Naive thymus-derived CD4-positive, alpha-beta T cell (primary cell): ENCODE measurements at regions of chr3 and their contacts with region 1.

Region 1: DNA sequence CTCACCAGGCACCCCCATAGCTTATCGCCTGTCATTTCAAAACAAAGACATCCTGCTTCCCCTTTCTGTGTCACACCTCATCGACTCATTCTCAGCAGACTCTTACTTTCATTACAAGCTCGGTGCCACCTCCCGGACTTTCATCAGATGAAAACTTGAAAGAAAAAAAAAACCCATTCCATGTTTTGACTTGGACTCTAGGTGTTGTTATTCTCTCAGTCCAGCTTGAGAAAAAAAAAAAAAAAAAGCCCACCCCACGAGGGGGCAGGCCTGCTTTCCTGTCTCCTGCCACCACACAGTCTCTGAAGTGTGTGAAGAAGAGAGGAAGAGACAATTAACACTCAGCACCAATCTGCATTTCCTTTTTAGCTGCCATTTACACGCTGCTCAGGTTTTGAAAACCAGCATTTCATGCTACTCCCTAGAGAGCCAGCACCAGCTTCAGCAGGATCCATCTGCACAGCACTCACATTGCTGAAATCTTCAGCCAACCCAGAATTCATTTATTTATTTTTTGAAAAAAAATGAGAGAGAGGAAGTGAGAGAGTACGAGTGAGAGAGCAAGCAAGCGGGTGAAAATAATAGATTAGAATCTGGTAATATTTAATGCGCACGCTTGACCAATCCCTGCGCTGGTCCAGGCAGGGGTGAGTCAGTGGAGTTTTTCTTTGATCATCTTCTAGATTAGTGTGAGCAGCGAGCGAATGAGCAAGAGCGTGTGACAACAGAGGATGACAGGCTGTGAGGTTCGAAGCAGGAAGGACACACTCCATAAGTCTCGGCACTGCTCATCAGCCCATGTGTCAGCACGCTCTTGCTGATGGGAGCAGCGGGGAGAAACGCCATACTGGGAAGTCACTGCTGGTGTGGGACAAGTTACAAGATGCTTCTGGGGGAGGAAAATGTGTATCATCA is 23.5 kb downstream of the ZNF80 start:
- DNase-seq: peak; percentile 33 to 83 (median 71)
- ATAC-seq: peak; percentile 61
- H3K4me3 ChIP-seq: peak overlapping the region; percentile 50
- H3K4me3 Mint-ChIP-seq: no peak overlapping the region
- H3K27ac ChIP-seq: peak overlapping the region; percentile 90
- H3K27ac Mint-ChIP-seq: no peak overlapping the region
- H3K4me1 ChIP-seq: peaks cover 43 to 65% of the 10 kb centered on the region in 2 donors
- H3K4me1 Mint-ChIP-seq: peaks cover 0 to 26% (median 3%) of the 10 kb centered on the region in 7 donors
- H3K27me3 ChIP-seq: no peaks in the 10 kb centered on the region
- H3K27me3 Mint-ChIP-seq: no peaks in the 10 kb centered on the region

Region 2: GRCh38 chr3:113019182-113020137 is 1194.4 kb before region 1 on chr3:
- CTCF ChIA-PET with region 1: no interaction called
- POLR2A ChIA-PET with region 1: no interaction called
- intact Hi-C with region 1: loop called in 1 of 2 experiments (anchors 5 kb)
- DNase-seq: peak; percentile 69 to 89 (median 74)
- ATAC-seq: peak; percentile 92
- H3K4me3 ChIP-seq: peak overlapping the region; percentile 81
- H3K4me3 Mint-ChIP-seq: peak overlapping the region; percentile 87 to 97 (median 92)
- H3K27ac ChIP-seq: peak overlapping the region; percentile 96
- H3K27ac Mint-ChIP-seq: peak overlapping the region; percentile 87 to 96 (median 91)
- H3K4me1 ChIP-seq: peaks cover 19 to 21% of the 10 kb centered on the region in 2 donors
- H3K4me1 Mint-ChIP-seq: peaks cover 44 to 87% (median 71%) of the 10 kb centered on the region in 7 donors
- H3K27me3 ChIP-seq: no peaks in the 10 kb centered on the region
- H3K27me3 Mint-ChIP-seq: no peaks in the 10 kb centered on the region

Region 3: GRCh38 chr3:114056130-114057010 is 157.5 kb before region 1 on chr3 and contains the starts of genes CCDC191 and QTRT2:
- CTCF ChIA-PET with region 1: no interaction called
- POLR2A ChIA-PET with region 1: no interaction called
- intact Hi-C with region 1: loop called (anchors 1 kb)
- DNase-seq: peak; percentile 82 to 99 (median 98)
- ATAC-seq: peak; percentile 97
- H3K4me3 ChIP-seq: peak within 1 kb of the TSS; percentile 95
- H3K4me3 Mint-ChIP-seq: peak within 1 kb of the TSS; percentile 91 to 100 (median 98)
- H3K27ac ChIP-seq: peak within 1 kb of the TSS; percentile 91
- H3K27ac Mint-ChIP-seq: peak within 1 kb of the TSS; percentile 87 to 99 (median 97)
- H3K4me1 ChIP-seq: peaks cover 10 to 12% of the 10 kb centered on the region in 2 donors
- H3K4me1 Mint-ChIP-seq: peaks cover 24 to 60% (median 55%) of the 10 kb centered on the region in 7 donors
- H3K27me3 ChIP-seq: no peaks in the 10 kb centered on the region
- H3K27me3 Mint-ChIP-seq: peaks cover 0 to 2% (median 0%) of the 10 kb centered on the region in 5 donors
- total RNA-seq, gene CCDC191: 3.9 to 8.8 (median 5.1) TPM
- total RNA-seq, gene QTRT2: 29.9 to 38.8 (median 33.8) TPM

Region 4: DNA sequence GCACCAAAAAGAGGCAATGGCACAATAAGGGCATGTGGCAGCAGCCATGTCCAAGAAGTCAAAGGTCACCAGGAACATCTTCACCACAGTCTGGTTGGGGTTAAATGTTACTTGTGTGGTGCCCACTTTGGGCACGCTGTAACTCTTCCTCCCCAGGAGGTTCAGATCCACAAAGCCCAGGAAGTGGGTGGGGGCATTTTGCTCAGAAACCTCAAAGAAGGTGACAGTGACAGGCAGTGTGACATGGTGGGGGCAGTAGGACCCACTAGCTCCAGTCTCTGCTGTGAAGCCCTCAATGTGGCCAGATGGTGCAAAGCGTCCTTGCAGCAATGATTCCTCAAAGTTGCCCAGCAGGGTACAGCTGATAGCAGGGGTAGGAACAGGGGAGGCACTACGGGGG is 17.7 kb after region 1 on chr3:
- CTCF ChIA-PET with region 1: interaction called, 12 read pairs
- POLR2A ChIA-PET with region 1: interaction called, 132 read pairs
- intact Hi-C with region 1: loop called in 1 of 2 experiments (anchors 1 kb)
- DNase-seq: peak in 7 of 9 donors; percentile 31 to 54 (median 46)
- ATAC-seq: peak; percentile 84
- H3K4me3 ChIP-seq: peak overlapping the region; percentile 7
- H3K4me3 Mint-ChIP-seq: peak overlapping the region; percentile 33 to 78 (median 68)
- H3K27ac ChIP-seq: peak overlapping the region; percentile 62
- H3K27ac Mint-ChIP-seq: peak overlapping the region; percentile 80 to 96 (median 88)
- H3K4me1 ChIP-seq: peaks cover 61 to 79% of the 10 kb centered on the region in 2 donors
- H3K4me1 Mint-ChIP-seq: peaks cover 38 to 89% (median 80%) of the 10 kb centered on the region in 7 donors
- H3K27me3 ChIP-seq: no peaks in the 10 kb centered on the region
- H3K27me3 Mint-ChIP-seq: peaks cover 0 to 2% (median 0%) of the 10 kb centered on the region in 5 donors

Region 5: GRCh38 chr3:114299421-114299820 is 85.5 kb after region 1 on chr3:
- CTCF ChIA-PET with region 1: interaction called, 9 read pairs
- POLR2A ChIA-PET with region 1: interaction called, 17 read pairs
- intact Hi-C with region 1: loop called in 1 of 2 experiments (anchors 1 kb)
- DNase-seq: peak in 5 of 9 donors; percentile 18 to 34 (median 26)
- ATAC-seq: peak; percentile 65
- H3K4me3 ChIP-seq: no peak overlapping the region
- H3K4me3 Mint-ChIP-seq: peak overlapping the region in 2 of 10 donors; percentile 19 to 56
- H3K27ac ChIP-seq: no peak overlapping the region
- H3K27ac Mint-ChIP-seq: peak overlapping the region in 1 of 9 donors; percentile 17
- H3K4me1 ChIP-seq: peaks cover 0 to 11% of the 10 kb centered on the region in 2 donors
- H3K4me1 Mint-ChIP-seq: peaks cover 0 to 21% (median 4%) of the 10 kb centered on the region in 7 donors
- H3K27me3 ChIP-seq: no peaks in the 10 kb centered on the region
- H3K27me3 Mint-ChIP-seq: no peaks in the 10 kb centered on the region

Region 6: GRCh38 chr3:115147329-115148141 is 933.7 kb after region 1 on chr3:
- CTCF ChIA-PET with region 1: no interaction called
- POLR2A ChIA-PET with region 1: interaction called, 9 read pairs
- intact Hi-C with region 1: loop called (anchors 1 kb)
- DNase-seq: peak; percentile 84 to 99 (median 98)
- ATAC-seq: peak; percentile 83
- H3K4me3 ChIP-seq: peak overlapping the region; percentile 65
- H3K4me3 Mint-ChIP-seq: peak overlapping the region; percentile 93 to 100 (median 96)
- H3K27ac ChIP-seq: peak overlapping the region; percentile 98
- H3K27ac Mint-ChIP-seq: peak overlapping the region; percentile 97 to 100 (median 100)
- H3K4me1 ChIP-seq: peaks cover 15 to 18% of the 10 kb centered on the region in 2 donors
- H3K4me1 Mint-ChIP-seq: peaks cover 16 to 45% (median 24%) of the 10 kb centered on the region in 7 donors
- H3K27me3 ChIP-seq: no peaks in the 10 kb centered on the region
- H3K27me3 Mint-ChIP-seq: peaks cover 0 to 8% (median 0%) of the 10 kb centered on the region in 5 donors

Region 7: DNA sequence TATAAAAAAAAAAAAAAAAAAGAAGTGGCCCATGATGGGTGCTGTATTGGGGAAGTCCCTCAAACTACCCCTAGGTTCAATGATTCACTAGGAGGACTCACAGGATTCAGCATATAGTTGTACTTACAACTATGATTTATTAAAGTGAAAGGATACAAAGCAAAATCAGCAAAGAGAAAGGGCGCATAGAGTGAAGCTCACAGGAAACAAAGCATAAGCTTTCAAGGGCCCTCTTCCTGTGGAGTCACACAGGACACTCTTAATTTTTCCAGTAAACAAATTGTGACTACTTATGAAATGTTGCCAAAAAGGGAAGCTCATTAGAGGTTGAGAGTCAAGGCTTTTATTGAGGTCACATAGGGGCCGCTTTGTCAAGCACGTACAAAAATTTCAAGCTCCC is 1255.8 kb after region 1 on chr3:
- CTCF ChIA-PET with region 1: no interaction called
- POLR2A ChIA-PET with region 1: no interaction called
- intact Hi-C with region 1: no loop called
- DNase-seq: no peak
- ATAC-seq: no peak
- H3K4me3 ChIP-seq: no peak overlapping the region
- H3K4me3 Mint-ChIP-seq: no peak overlapping the region
- H3K27ac ChIP-seq: no peak overlapping the region
- H3K27ac Mint-ChIP-seq: no peak overlapping the region
- H3K4me1 ChIP-seq: no peaks in the 10 kb centered on the region
- H3K4me1 Mint-ChIP-seq: no peaks in the 10 kb centered on the region
- H3K27me3 ChIP-seq: no peaks in the 10 kb centered on the region
- H3K27me3 Mint-ChIP-seq: peaks cover 0 to 13% (median 5%) of the 10 kb centered on the region in 5 donors